PC-3 (cell line): ENCODE measurements at regions of chr10 and their contacts with region 1.

Region 1: GRCh38 chr10:74704629-74705357 is 121.6 kb upstream of the KAT6B start:
- DNase-seq: peak; percentile 95
- ATAC-seq: peak; percentile 95
- H3K4me3 ChIP-seq: no peak overlapping the region
- H3K27ac ChIP-seq: peak overlapping the region; percentile 28
- H3K4me1 ChIP-seq: peaks cover 15% of the 10 kb centered on the region
- H3K27me3 ChIP-seq: no peaks in the 10 kb centered on the region
- CTCF ChIP-seq: no peak

Region 2: DNA sequence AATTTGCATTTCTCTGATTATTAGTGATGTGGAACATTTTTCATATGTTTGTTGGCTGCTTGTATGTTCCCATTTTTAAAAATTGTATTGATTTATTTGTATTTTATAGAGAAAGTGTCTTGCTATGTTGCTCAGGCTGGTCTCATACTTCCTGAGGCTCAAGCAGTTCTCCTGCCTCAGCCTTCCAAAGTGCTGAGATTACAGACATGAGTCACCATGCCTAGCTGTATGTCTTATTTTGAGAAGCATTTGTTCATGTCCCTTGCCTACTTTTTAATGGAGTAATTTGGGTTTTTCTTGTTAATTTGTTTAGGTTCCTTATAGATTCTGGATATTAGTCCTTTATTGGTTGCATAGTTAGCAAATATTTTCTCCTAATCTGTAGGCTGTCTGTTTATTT is 92.6 kb before region 1 on chr10:
- CTCF ChIA-PET with region 1: no interaction called
- POLR2A ChIA-PET with region 1: no interaction called
- intact Hi-C with region 1: no loop called
- DNase-seq: peak; percentile 69
- ATAC-seq: peak; percentile 88
- H3K4me3 ChIP-seq: no peak overlapping the region
- H3K27ac ChIP-seq: no peak overlapping the region
- H3K4me1 ChIP-seq: no peaks in the 10 kb centered on the region
- H3K27me3 ChIP-seq: no peaks in the 10 kb centered on the region
- CTCF ChIP-seq: no peak

Region 3: GRCh38 chr10:74683621-74684364 is 21.0 kb before region 1 on chr10:
- CTCF ChIA-PET with region 1: no interaction called
- POLR2A ChIA-PET with region 1: interaction called, 5 read pairs
- intact Hi-C with region 1: loop called (anchors 1 kb)
- DNase-seq: peak; percentile 62
- ATAC-seq: peak; percentile 94
- H3K4me3 ChIP-seq: no peak overlapping the region
- H3K27ac ChIP-seq: no peak overlapping the region
- H3K4me1 ChIP-seq: peaks cover 5% of the 10 kb centered on the region
- H3K27me3 ChIP-seq: no peaks in the 10 kb centered on the region
- CTCF ChIP-seq: no peak